Activated T-helper 2 cell treated with anti-CD3 and anti-CD28 coated beads, Interferon-gamma antibody, Interleukin-2, Interleukin-4, amounts not matched to agents 10 μg/mL and 5 μg/mL and 100 μg/mL, durations not matched to agents 14 hours and 24 hours and 36 hours (primary cell): ENCODE measurements at regions of chrX and their contacts with region 1.

Region 1: DNA sequence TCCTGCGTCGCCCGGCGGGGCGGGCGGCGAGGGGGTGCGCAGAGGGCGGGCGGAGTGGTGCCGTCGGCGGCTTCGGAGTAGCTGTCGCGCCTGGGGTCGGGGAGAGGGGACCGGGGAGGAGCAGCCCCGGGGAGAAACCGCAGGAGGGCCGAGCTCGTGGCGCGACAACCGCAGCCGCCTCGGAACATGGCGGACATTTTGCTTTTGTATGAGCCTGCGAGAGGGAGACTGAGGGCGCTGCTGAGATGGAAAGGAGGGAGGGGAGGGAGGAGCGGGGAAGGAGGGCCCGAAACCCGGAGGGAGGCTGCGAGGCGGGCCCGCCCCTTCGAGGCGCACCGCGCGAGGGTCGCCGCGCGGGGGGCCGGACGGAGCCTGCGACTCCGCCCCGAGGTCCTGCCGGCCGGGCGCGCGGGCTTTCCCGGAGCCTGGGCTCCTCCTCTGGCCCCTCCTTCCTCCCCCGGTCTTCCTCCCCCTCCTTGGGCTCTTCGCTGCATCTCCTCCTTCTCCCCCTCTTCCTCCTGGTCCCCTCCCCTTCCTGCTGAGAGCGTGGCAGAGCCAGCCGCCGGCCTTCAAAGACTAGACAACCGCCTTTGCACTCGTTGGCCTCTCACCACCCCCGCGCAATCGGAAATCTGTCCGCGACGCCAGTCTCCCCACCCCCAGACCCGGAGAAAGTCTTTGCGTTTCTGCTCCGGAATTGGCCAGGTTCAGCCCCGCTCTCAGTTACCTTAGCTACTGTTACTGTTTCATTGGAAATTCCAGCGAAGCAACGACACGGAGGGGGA is 1.1 kb downstream of the INTS6L start:
- DNase-seq: peak; percentile 81
- H3K4me3 Mint-ChIP-seq: peak overlapping the region; percentile 99
- H3K27ac Mint-ChIP-seq: peak overlapping the region; percentile 100
- H3K4me1 Mint-ChIP-seq: peaks cover 37% of the 10 kb centered on the region
- H3K27me3 Mint-ChIP-seq: no peaks in the 10 kb centered on the region

Region 2: GRCh38 chrX:135324463-135324862 is 197.1 kb before region 1 on chrX:
- intact Hi-C with region 1: no loop called
- DNase-seq: no peak
- H3K4me3 Mint-ChIP-seq: no peak overlapping the region
- H3K27ac Mint-ChIP-seq: no peak overlapping the region
- H3K4me1 Mint-ChIP-seq: no peaks in the 10 kb centered on the region
- H3K27me3 Mint-ChIP-seq: no peaks in the 10 kb centered on the region

Region 3: GRCh38 chrX:135484641-135485289 is 36.8 kb before region 1 on chrX:
- intact Hi-C with region 1: loop called (anchors 5 kb)
- DNase-seq: no peak
- H3K4me3 Mint-ChIP-seq: no peak overlapping the region
- H3K27ac Mint-ChIP-seq: no peak overlapping the region
- H3K4me1 Mint-ChIP-seq: no peaks in the 10 kb centered on the region
- H3K27me3 Mint-ChIP-seq: peaks cover 1% of the 10 kb centered on the region

Region 4: GRCh38 chrX:135535077-135535940 is 13.7 kb after region 1 on chrX:
- intact Hi-C with region 1: loop called (anchors 2 kb)
- DNase-seq: no peak
- H3K4me3 Mint-ChIP-seq: no peak overlapping the region
- H3K27ac Mint-ChIP-seq: peak overlapping the region; percentile 20
- H3K4me1 Mint-ChIP-seq: peaks cover 43% of the 10 kb centered on the region
- H3K27me3 Mint-ChIP-seq: no peaks in the 10 kb centered on the region

Region 5: GRCh38 chrX:135572436-135572835 is 50.8 kb after region 1 on chrX:
- intact Hi-C with region 1: loop called (anchors 5 kb)
- DNase-seq: no peak
- H3K4me3 Mint-ChIP-seq: no peak overlapping the region
- H3K27ac Mint-ChIP-seq: no peak overlapping the region
- H3K4me1 Mint-ChIP-seq: peaks cover 1% of the 10 kb centered on the region
- H3K27me3 Mint-ChIP-seq: no peaks in the 10 kb centered on the region

Region 6: GRCh38 chrX:135652611-135653010 is 131.0 kb after region 1 on chrX:
- intact Hi-C with region 1: no loop called
- DNase-seq: no peak
- H3K4me3 Mint-ChIP-seq: no peak overlapping the region
- H3K27ac Mint-ChIP-seq: no peak overlapping the region
- H3K4me1 Mint-ChIP-seq: peaks cover 3% of the 10 kb centered on the region
- H3K27me3 Mint-ChIP-seq: no peaks in the 10 kb centered on the region

Region 7: GRCh38 chrX:135973548-135974278 is 452.1 kb after region 1 on chrX and contains the start of gene MMGT1:
- intact Hi-C with region 1: loop called (anchors 2 kb)
- DNase-seq: peak; percentile 74
- H3K4me3 Mint-ChIP-seq: peak within 1 kb of the TSS; percentile 97
- H3K27ac Mint-ChIP-seq: peak within 1 kb of the TSS; percentile 97
- H3K4me1 Mint-ChIP-seq: peaks cover 31% of the 10 kb centered on the region
- H3K27me3 Mint-ChIP-seq: peaks cover 11% of the 10 kb centered on the region
- total RNA-seq, gene MMGT1: 24.0 and 24.6 TPM in 2 replicates